ENCODE measurements at regions of chr1 and their contacts with region 1.

Region 1: GRCh38 chr1:205273551-205273982 is 45.8 kb downstream of the TMCC2 start:
- DNase-seq: peak; percentile 94
- H3K4me3 Mint-ChIP-seq: no peak overlapping the region
- H3K27ac Mint-ChIP-seq: peak overlapping the region; percentile 27
- H3K4me1 Mint-ChIP-seq: peaks cover 51% of the 10 kb centered on the region
- H3K27me3 Mint-ChIP-seq: no peaks in the 10 kb centered on the region

Region 2: DNA sequence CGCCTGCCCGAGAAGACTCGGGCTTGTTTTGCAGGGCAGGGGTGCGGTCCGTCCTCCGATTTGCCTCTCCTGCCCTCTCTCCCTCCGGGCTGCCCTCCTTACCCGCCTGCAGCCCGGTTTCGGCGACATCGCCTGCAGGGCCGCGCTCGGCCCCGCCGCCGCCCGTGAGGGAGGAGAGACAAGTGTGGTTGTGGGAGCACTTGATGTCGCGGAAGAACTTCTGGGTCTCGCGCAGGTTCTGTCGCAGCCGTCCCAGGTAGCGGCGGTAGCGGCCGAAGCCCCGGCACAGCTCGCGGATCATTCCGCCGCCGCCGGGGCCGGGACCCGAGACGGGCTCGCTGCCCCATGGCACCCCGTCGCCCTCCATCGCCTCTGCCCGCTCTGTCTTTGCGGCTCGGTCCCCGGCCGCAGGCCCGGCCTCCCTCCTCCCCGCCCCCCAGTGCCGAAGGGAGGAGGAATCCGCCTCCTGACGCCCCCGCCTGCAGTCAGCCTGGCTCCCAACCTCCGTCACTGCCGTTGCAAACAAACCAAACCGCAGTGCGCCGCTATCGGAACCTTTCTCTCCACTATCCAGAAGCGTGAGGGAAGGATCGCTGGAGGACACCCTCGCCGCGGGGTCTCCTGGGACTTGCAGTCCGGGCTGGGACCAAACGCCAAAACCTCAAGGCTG is 62.3 kb before region 1 on chr1 and contains the start of gene DSTYK:
- CTCF ChIA-PET with region 1: no interaction called
- intact Hi-C with region 1: no loop called
- DNase-seq: peak; percentile 97
- H3K4me3 Mint-ChIP-seq: peak within 1 kb of the TSS; percentile 93
- H3K27ac Mint-ChIP-seq: peak within 1 kb of the TSS; percentile 95
- H3K4me1 Mint-ChIP-seq: peaks cover 57% of the 10 kb centered on the region
- H3K27me3 Mint-ChIP-seq: no peaks in the 10 kb centered on the region
- total RNA-seq, gene DSTYK: 10.9 to 11.5 TPM

Region 3: DNA sequence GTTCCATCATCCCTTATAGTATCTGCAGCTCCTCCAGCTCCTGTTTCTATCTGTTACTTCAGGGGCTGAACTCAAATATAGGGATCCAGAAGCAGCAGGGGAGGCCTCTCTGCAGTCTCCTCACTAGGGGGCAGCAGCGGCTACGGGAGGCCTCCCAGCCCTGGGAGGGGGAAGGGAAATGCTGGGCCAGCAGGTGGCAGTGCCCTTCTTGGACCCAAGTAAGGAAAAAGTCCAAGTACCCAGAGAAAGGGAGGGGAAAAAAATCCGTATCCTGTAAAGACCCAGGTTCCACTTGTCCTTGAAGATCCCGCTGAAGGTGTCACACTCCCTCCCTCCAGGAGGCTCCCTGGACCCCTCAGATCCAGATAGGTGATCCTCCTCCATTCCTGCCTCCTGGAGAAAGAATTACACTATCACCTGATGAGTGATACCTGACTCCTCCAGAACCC is 62.1 kb after region 1 on chr1:
- CTCF ChIA-PET with region 1: interaction called, 948 read pairs
- intact Hi-C with region 1: no loop called
- DNase-seq: peak; percentile 92
- H3K4me3 Mint-ChIP-seq: no peak overlapping the region
- H3K27ac Mint-ChIP-seq: no peak overlapping the region
- H3K4me1 Mint-ChIP-seq: no peaks in the 10 kb centered on the region
- H3K27me3 Mint-ChIP-seq: no peaks in the 10 kb centered on the region

Region 4: DNA sequence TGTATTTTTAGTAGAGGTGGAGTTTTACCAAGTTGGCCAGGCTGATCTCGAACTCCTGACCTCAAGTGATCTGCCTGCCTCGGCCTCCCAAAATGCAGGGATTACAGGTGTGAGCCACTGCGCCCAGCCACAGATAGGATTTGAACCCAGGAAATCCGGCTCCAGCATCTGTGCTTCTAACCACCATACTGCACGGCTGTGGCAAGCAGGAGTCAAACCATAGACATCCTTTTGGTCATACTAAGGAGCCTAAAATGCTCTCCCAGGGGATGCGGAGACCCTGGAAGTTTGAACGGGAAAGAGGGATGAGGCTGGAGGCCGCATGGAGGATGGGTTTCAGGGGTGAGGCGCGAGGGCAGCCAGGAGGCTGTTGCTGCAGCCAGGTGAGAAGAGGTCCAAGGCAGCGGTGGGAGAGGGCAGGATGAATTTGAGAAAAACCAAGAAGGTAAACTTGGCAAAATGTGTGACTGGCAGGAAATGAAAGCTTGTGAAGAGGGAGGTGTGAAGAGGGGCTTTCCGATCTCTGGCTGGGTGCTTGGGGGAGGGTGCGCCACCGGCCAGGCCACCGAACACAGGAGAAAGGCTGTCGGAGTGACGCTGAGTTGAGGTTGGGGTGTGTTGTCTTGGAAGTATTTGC is 206.9 kb after region 1 on chr1:
- CTCF ChIA-PET with region 1: interaction called, 12 read pairs
- intact Hi-C with region 1: loop called (anchors 5 kb)
- DNase-seq: peak; percentile 83
- H3K4me3 Mint-ChIP-seq: peak overlapping the region; percentile 32
- H3K27ac Mint-ChIP-seq: peak overlapping the region; percentile 10
- H3K4me1 Mint-ChIP-seq: peaks cover 22% of the 10 kb centered on the region
- H3K27me3 Mint-ChIP-seq: peaks cover 42% of the 10 kb centered on the region

Measured in activated naive CD4-positive, alpha-beta T cell treated with anti-CD3 and anti-CD28 coated beads for 36 hours (primary cell).